ENCODE measurements at regions of chr6 and their contacts with region 1.

Region 1: GRCh38 chr6:37783856-37784584 is 35.5 kb upstream of the ZFAND3 start:
- DNase-seq: no peak
- ATAC-seq: peak; percentile 57 to 60
- H3K4me3 ChIP-seq: peak overlapping the region; percentile 50 to 72 (median 56)
- H3K27ac ChIP-seq: no peak overlapping the region
- H3K4me1 ChIP-seq: peaks cover 7 to 13% of the 10 kb centered on the region in 2 donors
- H3K27me3 ChIP-seq: no peaks in the 10 kb centered on the region
- CTCF ChIP-seq: peak in 2 of 5 experiments; percentile 22 to 31
- POLR2A ChIP-seq: no peak

Region 2: GRCh38 chr6:37679539-37680476 is 104.2 kb before region 1 on chr6:
- in situ Hi-C with region 1: no loop called
- intact Hi-C with region 1: no loop called
- DNase-seq: peak; percentile 71 to 77
- ATAC-seq: peak; percentile 90 to 98
- H3K4me3 ChIP-seq: no peak overlapping the region
- H3K27ac ChIP-seq: peak overlapping the region in 2 of 4 donors; percentile 18 to 64
- H3K4me1 ChIP-seq: peaks cover 9 to 11% of the 10 kb centered on the region in 2 donors
- H3K27me3 ChIP-seq: no peaks in the 10 kb centered on the region
- CTCF ChIP-seq: no peak
- POLR2A ChIP-seq: no peak

Region 3: GRCh38 chr6:37741757-37742400 is 42.1 kb before region 1 on chr6:
- in situ Hi-C with region 1: no loop called
- intact Hi-C with region 1: loop called (anchors 2 kb)
- DNase-seq: no peak
- ATAC-seq: no peak
- H3K4me3 ChIP-seq: no peak overlapping the region
- H3K27ac ChIP-seq: no peak overlapping the region
- H3K4me1 ChIP-seq: no peaks in the 10 kb centered on the region
- H3K27me3 ChIP-seq: peaks cover 0 to 3% (median 0%) of the 10 kb centered on the region in 3 donors
- CTCF ChIP-seq: peak in 4 of 5 experiments; percentile 25 to 58 (median 42)
- POLR2A ChIP-seq: no peak

Region 4: GRCh38 chr6:38012573-38012972 is 228.6 kb after region 1 on chr6:
- in situ Hi-C with region 1: loop called in 1 of 4 experiments (anchors 10 kb)
- intact Hi-C with region 1: no loop called
- DNase-seq: peak in 1 of 2 donors; percentile 24
- ATAC-seq: peak; percentile 72 to 83
- H3K4me3 ChIP-seq: no peak overlapping the region
- H3K27ac ChIP-seq: no peak overlapping the region
- H3K4me1 ChIP-seq: peaks cover 36 to 38% of the 10 kb centered on the region in 2 donors
- H3K27me3 ChIP-seq: no peaks in the 10 kb centered on the region
- CTCF ChIP-seq: peak; percentile 48 to 71 (median 63)
- POLR2A ChIP-seq: no peak

Measured in gastrocnemius medialis (tissue), 4 donors.